Posterior cingulate gyrus (tissue), 11 donors: ENCODE measurements at regions of chr6 and their contacts with region 1.

Region 1: DNA sequence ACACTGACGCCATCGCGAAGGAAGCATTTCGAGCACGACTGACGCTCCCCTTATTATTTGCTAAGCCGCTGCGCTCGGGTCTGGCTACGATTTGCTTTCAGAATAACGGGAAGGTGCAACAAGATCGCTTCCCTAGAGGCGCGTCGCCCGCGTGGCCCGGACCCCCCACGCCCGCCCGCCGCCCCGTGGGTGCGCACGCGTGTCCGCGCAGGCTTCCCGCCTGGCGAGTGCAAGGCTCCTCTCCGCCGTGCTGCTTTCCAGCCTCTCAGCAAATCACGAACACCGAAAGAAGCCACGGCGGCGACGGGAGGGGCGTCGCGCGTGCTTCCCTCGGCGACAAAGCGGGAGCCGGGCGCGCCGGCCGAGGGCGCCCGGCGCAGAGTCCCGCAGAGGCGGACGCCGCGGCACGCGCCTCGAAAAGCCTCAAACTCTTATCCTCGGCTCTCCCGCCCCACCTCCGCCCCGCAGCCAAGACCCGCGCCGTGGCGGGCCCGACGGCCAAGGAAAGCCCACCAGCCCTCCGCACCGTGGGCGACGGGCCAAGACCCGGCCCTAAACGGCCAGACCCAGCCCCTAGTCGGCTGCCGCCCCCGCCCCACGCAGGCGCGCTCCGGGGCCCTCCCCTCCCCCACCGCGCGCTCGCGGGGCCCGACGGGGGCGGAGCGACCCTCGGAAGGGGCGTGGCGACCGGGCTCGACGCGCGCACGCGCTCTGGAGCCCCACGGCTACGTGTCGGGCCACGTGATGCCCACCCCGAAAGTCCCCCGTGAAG is 987 bp upstream of the QKI start:
- DNase-seq: peak; percentile 77 to 98 (median 84)

Region 2: DNA sequence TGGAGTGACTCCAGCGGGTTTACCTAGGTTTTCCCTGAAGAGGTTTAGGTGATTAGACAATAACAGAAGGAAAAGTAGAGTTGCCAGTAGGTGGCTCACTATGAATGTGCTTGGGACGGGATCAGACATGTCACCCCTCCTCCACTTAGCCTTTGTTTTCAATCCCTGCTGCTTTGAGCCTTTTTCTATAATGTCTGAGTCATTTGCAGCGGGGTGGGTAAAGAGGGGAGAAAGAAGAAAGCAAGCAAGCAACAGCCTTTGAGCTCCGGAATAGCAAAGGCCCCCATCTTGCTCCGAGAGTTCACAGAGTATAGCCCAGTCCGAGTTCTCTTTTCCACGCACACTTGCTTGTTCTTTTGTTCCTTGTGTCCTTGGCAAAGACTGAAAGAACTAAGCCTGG is 556.6 kb before region 1 on chr6:
- intact Hi-C with region 1: loop called (anchors 2 kb)
- DNase-seq: peak in 8 of 10 donors; percentile 17 to 89 (median 52)

Region 3: DNA sequence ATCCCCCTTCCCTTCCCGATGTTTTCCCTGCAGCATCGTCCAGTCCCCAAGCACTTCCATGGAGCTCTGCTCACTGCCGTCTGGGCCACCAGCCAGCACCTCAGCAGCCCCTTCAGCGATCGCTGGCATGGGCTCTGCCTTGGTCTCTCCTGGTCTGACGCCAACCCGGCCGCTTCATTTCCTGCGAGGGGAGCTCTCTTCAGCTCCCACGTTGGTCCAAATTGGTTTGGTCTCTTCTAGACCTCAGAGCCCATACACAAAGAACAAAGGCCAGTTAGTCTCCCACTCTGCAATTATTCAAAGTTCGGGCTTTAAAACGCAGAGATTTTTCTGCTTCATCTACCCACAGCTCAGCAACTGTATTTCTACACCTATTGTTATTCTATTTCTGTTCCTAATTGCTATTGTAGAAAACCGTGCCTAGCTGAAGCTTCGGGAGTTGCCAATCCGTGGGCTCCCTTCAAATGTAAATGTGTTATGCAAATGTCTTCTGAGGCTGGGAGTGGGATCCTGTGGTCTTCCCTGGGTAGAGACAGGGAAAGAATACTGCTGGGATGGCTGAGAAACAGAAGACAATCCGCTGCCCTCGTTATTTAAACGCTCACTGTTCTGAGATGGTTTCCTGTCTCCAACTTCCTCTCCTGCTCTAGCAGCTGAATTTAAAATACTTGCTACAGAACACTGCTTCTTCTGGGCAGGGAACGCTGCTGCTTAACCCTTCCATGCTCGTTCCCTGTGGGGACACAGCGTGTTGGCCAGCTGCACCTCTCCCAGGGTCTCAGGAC is 153.2 kb before region 1 on chr6:
- intact Hi-C with region 1: loop called (anchors 5 kb)
- DNase-seq: peak; percentile 57 to 90 (median 74)

Region 4: DNA sequence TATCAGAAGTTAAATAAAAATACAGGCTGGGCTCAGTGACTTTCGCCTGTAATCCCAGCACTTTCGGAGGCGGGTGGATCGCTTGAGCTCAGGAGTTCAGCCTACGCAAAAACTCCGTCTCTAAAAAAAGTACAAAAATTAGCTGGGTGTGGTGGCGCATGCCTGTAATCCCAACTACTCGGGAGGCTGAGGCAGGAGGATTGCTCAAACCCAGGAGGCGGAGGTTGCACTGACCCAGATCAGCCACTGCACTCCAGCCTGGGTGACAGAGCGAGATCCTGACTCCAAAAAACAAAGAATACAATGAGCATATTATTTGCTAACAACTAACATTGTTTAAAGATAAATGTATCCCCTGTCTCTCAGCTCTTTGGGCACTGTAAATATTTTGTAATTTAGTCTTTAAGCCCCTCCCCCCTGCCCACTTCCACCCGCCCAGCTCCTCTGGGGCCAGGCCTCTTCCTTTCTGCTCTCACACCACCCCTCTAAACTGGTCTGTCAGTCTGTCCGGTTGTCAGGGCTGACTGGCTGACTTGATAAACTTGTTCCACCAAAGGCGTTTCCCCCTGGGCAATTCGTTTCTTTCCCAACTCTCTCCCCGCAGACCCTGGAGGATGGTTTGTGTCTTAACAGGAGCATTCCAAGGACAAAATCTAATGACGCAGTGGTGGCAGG is 61.4 kb before region 1 on chr6:
- intact Hi-C with region 1: loop called (anchors 2 kb)
- DNase-seq: peak in 6 of 10 donors; percentile 40 to 93 (median 67)

Region 5: GRCh38 chr6:163383912-163384311 is 29.6 kb before region 1 on chr6:
- intact Hi-C with region 1: no loop called
- DNase-seq: no peak

Region 6: GRCh38 chr6:164927288-164928056 is 1513.9 kb after region 1 on chr6:
- intact Hi-C with region 1: loop called (anchors 2 kb)
- DNase-seq: peak; percentile 82 to 98 (median 86)